SK-N-SH (cell line): ENCODE measurements at regions of chr5 and their contacts with region 1.

Region 1: DNA sequence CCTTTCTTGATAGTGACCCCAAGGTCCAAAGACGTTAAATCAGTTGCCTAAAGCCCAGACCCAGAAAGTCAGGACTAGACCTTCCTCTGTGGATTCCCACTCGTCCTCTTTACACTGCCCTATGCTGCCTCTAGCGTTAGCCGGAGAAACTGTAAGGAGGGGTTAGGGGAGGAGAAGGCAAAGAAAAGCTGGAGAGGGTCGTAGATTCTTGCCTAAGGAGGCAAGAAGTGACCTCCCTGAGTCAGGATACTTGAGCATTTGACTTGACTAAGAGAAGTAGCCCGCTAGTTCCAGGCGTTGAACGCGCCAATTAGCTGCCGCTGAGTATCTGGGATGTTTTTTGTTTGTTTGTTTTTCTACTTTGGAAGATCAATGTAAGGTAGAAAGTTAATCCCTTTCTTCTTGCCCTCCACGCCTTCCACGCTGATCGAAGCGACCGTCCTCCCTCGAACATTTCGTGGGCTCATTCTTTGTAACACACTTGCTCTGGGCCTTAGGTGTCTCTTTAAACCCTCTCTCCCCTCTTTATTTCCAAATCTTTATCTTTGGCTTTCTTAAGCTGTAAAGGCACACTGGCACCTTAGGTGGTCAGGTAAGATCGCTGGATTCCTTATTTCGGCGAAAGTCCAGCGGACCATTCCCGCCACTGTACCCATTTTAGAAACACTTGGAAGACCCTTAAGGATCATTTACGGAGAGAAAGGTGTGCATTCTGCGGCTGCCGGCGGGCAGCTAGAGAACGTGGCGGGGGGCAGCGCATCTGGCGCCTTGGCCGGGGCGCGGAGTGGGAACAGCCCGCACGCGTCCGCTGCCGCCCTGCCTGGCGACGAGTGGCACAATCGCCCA is 5.1 kb upstream of the RGMB start:
- DNase-seq: peak; percentile 73
- H3K4me3 ChIP-seq: peak overlapping the region; percentile 83 to 90
- H3K27ac ChIP-seq: peak overlapping the region; percentile 66 to 96
- H3K4me1 ChIP-seq: peaks cover 9 to 11% of the 10 kb centered on the region in 2 experiments; a peak in 3 of 4 replicates
- H3K27me3 ChIP-seq: no peaks in the 10 kb centered on the region
- CTCF ChIP-seq: peak; percentile 97
- EP300 ChIP-seq: no peak
- RAD21 ChIP-seq: peak; percentile 81

Region 2: GRCh38 chr5:98727686-98728085 is 40.7 kb before region 1 on chr5:
- CTCF ChIA-PET with region 1: interaction called, 14 read pairs
- POLR2A ChIA-PET with region 1: no interaction called
- DNase-seq: no peak
- H3K4me3 ChIP-seq: no peak overlapping the region
- H3K27ac ChIP-seq: no peak overlapping the region
- H3K4me1 ChIP-seq: no peaks in the 10 kb centered on the region
- H3K27me3 ChIP-seq: no peaks in the 10 kb centered on the region
- CTCF ChIP-seq: no peak
- EP300 ChIP-seq: no peak
- RAD21 ChIP-seq: no peak

Region 3: DNA sequence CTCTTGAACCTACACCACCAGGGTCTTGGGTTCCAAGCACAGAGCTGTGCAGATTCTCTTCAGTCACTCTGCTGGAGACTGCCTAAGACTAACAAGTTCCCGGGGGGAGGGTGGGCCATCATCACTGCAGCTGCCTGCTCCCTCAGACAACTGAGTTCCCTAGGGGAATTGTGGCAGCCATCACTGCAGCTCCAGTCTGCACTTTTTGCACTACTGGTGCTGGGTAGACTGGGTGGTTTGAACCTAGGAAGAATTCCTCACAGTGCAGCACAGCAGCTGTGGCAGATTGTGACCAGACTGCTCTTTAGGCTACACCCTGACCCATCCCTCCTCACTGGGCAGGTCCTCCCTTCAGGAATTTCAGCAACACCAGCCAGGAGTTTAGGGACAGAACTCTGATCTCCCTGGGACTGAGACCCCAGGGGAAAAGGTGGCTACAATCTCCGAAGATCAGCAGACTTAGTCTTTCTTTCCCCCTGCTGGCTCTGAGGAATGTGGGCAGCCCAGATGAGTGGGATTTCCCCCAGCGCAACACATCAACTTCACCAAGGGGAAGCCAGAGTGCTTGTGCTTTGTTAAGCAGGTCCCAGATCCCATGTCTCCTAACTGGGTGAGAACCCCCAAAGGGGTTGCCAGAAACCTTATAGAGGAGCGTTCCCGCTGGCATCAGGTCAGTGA is 25.8 kb before region 1 on chr5:
- CTCF ChIA-PET with region 1: interaction called, 13 read pairs
- POLR2A ChIA-PET with region 1: no interaction called
- DNase-seq: no peak
- H3K4me3 ChIP-seq: no peak overlapping the region
- H3K27ac ChIP-seq: no peak overlapping the region
- H3K4me1 ChIP-seq: no peaks in the 10 kb centered on the region
- H3K27me3 ChIP-seq: no peaks in the 10 kb centered on the region
- CTCF ChIP-seq: no peak
- EP300 ChIP-seq: no peak
- RAD21 ChIP-seq: no peak

Region 4: DNA sequence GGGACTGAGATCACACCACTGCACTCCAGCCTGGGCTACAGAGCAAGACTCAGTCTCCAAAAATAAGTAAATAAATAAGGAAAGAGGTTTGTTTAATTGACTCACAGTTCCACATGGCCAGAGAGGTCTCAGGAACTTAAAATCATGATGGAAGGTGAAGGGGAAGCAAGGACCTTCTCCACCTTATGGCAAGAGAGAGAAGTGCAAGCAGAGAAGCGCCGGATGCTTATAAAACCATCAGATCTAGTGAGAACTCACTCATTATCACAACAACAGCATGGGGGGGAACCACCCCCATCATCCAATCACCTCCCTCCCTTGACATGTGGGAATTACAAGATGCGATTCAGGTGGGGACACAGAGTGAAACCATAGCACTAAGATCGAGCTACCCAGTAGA is 17.7 kb before region 1 on chr5:
- CTCF ChIA-PET with region 1: interaction called, 70 read pairs
- POLR2A ChIA-PET with region 1: no interaction called
- DNase-seq: no peak
- H3K4me3 ChIP-seq: no peak overlapping the region
- H3K27ac ChIP-seq: no peak overlapping the region
- H3K4me1 ChIP-seq: no peaks in the 10 kb centered on the region
- H3K27me3 ChIP-seq: no peaks in the 10 kb centered on the region
- CTCF ChIP-seq: peak; percentile 40
- EP300 ChIP-seq: no peak
- RAD21 ChIP-seq: peak; percentile 29; the same call in 1 of the 2 replicates

Region 5: DNA sequence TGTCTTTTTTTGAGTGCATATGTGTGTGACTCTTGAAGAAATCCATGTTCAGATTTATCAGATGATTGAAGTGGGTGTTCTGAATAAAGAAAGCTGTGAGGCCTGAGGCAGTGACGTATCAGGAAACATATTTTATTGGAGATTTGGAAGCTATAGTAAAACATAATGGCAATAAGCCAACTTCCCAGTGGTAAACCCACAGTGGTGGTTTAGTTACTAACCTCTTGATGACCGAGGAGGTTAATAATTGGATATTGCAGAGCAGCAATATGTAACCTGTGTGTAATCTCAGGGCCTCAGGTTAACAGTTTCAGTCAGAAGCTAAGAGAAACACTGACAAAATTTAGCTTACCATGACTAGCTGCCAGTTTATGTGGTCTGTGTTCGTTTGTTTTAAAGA is 12.0 kb after region 1 on chr5:
- CTCF ChIA-PET with region 1: interaction called, 409 read pairs
- POLR2A ChIA-PET with region 1: no interaction called
- DNase-seq: no peak
- H3K4me3 ChIP-seq: no peak overlapping the region
- H3K27ac ChIP-seq: peak overlapping the region in 1 of 2 experiments; percentile 24; a peak in 1 of 4 replicates
- H3K4me1 ChIP-seq: peaks cover 14 to 59% of the 10 kb centered on the region in 2 experiments; a peak in 3 of 4 replicates
- H3K27me3 ChIP-seq: no peaks in the 10 kb centered on the region
- CTCF ChIP-seq: no peak
- EP300 ChIP-seq: no peak
- RAD21 ChIP-seq: no peak